ENCODE measurements at regions of chr11 and their contacts with region 1.

Region 1: GRCh38 chr11:66288671-66289547 is at the start of gene YIF1A:
- DNase-seq: peak; percentile 98 to 99 (median 98)
- H3K4me3 ChIP-seq: peak within 1 kb of the TSS; percentile 77 to 84 (median 81)
- H3K4me3 Mint-ChIP-seq: peak within 1 kb of the TSS; percentile 86 to 94
- H3K27ac ChIP-seq: peak within 1 kb of the TSS; percentile 37 to 74
- H3K27ac Mint-ChIP-seq: peak within 1 kb of the TSS; percentile 82 to 90 (median 84)
- H3K4me1 ChIP-seq: peaks cover 37 to 44% of the 10 kb centered on the region in 2 donors
- H3K4me1 Mint-ChIP-seq: peaks cover 36% of the 10 kb centered on the region
- H3K27me3 ChIP-seq: peaks cover 24 to 41% of the 10 kb centered on the region in 2 donors
- H3K27me3 Mint-ChIP-seq: peaks cover 31 to 41% (median 38%) of the 10 kb centered on the region in 3 donors
- CTCF ChIP-seq: no peak
- polyA plus RNA-seq, gene YIF1A: 50.0 to 81.1 (median 63.8) TPM

Region 2: GRCh38 chr11:65934014-65934413 is 354.9 kb before region 1 on chr11:
- intact Hi-C with region 1: no loop called
- DNase-seq: no peak
- H3K4me3 ChIP-seq: no peak overlapping the region
- H3K4me3 Mint-ChIP-seq: no peak overlapping the region
- H3K27ac ChIP-seq: no peak overlapping the region
- H3K27ac Mint-ChIP-seq: no peak overlapping the region
- H3K4me1 ChIP-seq: peaks cover 0 to under 1% of the 10 kb centered on the region in 2 donors
- H3K4me1 Mint-ChIP-seq: peaks cover 12% of the 10 kb centered on the region
- H3K27me3 ChIP-seq: no peaks in the 10 kb centered on the region
- H3K27me3 Mint-ChIP-seq: peaks cover 1 to 11% (median 3%) of the 10 kb centered on the region in 3 donors
- CTCF ChIP-seq: no peak

Region 3: GRCh38 chr11:66207876-66208275 is 81.0 kb before region 1 on chr11:
- intact Hi-C with region 1: no loop called
- DNase-seq: no peak
- H3K4me3 ChIP-seq: no peak overlapping the region
- H3K4me3 Mint-ChIP-seq: no peak overlapping the region
- H3K27ac ChIP-seq: no peak overlapping the region
- H3K27ac Mint-ChIP-seq: peak overlapping the region in 2 of 7 donors; percentile 11 to 75
- H3K4me1 ChIP-seq: peaks cover 9 to 10% of the 10 kb centered on the region in 2 donors
- H3K4me1 Mint-ChIP-seq: peaks cover 10% of the 10 kb centered on the region
- H3K27me3 ChIP-seq: no peaks in the 10 kb centered on the region
- H3K27me3 Mint-ChIP-seq: no peaks in the 10 kb centered on the region
- CTCF ChIP-seq: no peak

Region 4: GRCh38 chr11:66268283-66268951 is 20.5 kb before region 1 on chr11 and contains the start of gene RAB1B:
- intact Hi-C with region 1: loop called in 1 of 2 experiments (anchors 2 kb)
- DNase-seq: peak; percentile 99 to 100 (median 99)
- H3K4me3 ChIP-seq: peak within 1 kb of the TSS; percentile 80 to 99 (median 97)
- H3K4me3 Mint-ChIP-seq: peak within 1 kb of the TSS; percentile 93 to 98
- H3K27ac ChIP-seq: peak within 1 kb of the TSS; percentile 82 to 85
- H3K27ac Mint-ChIP-seq: peak within 1 kb of the TSS; percentile 90 to 99 (median 96)
- H3K4me1 ChIP-seq: peaks cover 26 to 35% of the 10 kb centered on the region in 2 donors
- H3K4me1 Mint-ChIP-seq: peaks cover 33% of the 10 kb centered on the region
- H3K27me3 ChIP-seq: no peaks in the 10 kb centered on the region
- H3K27me3 Mint-ChIP-seq: peaks cover 0 to 3% (median 3%) of the 10 kb centered on the region in 3 donors
- CTCF ChIP-seq: no peak
- polyA plus RNA-seq, gene RAB1B: 17.9 to 90.5 (median 18.8) TPM

Region 5: GRCh38 chr11:66317723-66318599 is 29.1 kb after region 1 on chr11:
- intact Hi-C with region 1: no loop called
- DNase-seq: peak; percentile 90 to 95 (median 94)
- H3K4me3 ChIP-seq: peak overlapping the region in 1 of 3 experiments; percentile 44
- H3K4me3 Mint-ChIP-seq: peak overlapping the region; percentile 39 to 69
- H3K27ac ChIP-seq: peak overlapping the region; percentile 79 to 83
- H3K27ac Mint-ChIP-seq: peak overlapping the region; percentile 88 to 96 (median 94)
- H3K4me1 ChIP-seq: peaks cover 45 to 51% of the 10 kb centered on the region in 2 donors
- H3K4me1 Mint-ChIP-seq: peaks cover 41% of the 10 kb centered on the region
- H3K27me3 ChIP-seq: no peaks in the 10 kb centered on the region
- H3K27me3 Mint-ChIP-seq: peaks cover 0 to 16% (median 13%) of the 10 kb centered on the region in 3 donors
- CTCF ChIP-seq: no peak